ENCODE measurements at regions of chr17 and their contacts with region 1.

Region 1: GRCh38 chr17:43316522-43317142 is 82.2 kb upstream of the ARL4D start:
- DNase-seq: no peak
- ATAC-seq: 0 out of 6 replicates have a peak, but pooled peaks of 1 of the 2 experiments have one; percentile 3
- H3K4me3 ChIP-seq: no peak overlapping the region
- H3K27ac ChIP-seq: no peak overlapping the region
- H3K4me1 ChIP-seq: no peaks in the 10 kb centered on the region
- CTCF ChIP-seq: no peak
- EP300 ChIP-seq: no peak
- POLR2A ChIP-seq: no peak
- RAD21 ChIP-seq: no peak

Region 2: GRCh38 chr17:42997984-42998938 is 318.4 kb before region 1 on chr17 and contains the start of gene RPL27:
- CTCF ChIA-PET with region 1: interaction called, 3 read pairs
- POLR2A ChIA-PET with region 1: interaction called, 24 read pairs
- DNase-seq: peak; percentile 96 to 100
- ATAC-seq: peak; percentile 92 to 95
- H3K4me3 ChIP-seq: peak within 1 kb of the TSS; percentile 66
- H3K27ac ChIP-seq: peak within 1 kb of the TSS; percentile 87 to 91
- H3K4me1 ChIP-seq: peaks cover 45% of the 10 kb centered on the region
- CTCF ChIP-seq: peak; percentile 88
- EP300 ChIP-seq: no peak; a peak in 1 of 5 replicates
- POLR2A ChIP-seq: peak; percentile 88
- RAD21 ChIP-seq: peak; percentile 79 to 84
- polyA plus RNA-seq, gene RPL27: 5,588 and 5,746 TPM in 2 replicates

Region 3: DNA sequence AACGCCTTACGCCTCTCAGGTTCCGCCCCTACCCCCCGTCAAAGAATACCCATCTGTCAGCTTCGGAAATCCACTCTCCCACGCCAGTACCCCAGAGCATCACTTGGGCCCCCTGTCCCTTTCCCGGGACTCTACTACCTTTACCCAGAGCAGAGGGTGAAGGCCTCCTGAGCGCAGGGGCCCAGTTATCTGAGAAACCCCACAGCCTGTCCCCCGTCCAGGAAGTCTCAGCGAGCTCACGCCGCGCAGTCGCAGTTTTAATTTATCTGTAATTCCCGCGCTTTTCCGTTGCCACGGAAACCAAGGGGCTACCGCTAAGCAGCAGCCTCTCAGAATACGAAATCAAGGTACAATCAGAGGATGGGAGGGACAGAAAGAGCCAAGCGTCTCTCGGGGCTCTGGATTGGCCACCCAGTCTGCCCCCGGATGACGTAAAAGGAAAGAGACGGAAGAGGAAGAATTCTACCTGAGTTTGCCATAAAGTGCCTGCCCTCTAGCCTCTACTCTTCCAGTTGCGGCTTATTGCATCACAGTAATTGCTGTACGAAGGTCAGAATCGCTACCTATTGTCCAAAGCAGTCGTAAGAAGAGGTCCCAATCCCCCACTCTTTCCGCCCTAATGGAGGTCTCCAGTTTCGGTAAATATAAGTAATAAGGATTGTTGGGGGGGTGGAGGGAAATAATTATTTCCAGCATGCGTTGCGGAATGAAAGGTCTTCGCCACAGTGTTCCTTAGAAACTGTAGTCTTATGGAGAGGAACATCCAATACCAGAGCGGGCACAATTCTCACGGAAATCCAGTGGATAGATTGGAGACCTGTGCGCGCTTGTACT is 191.3 kb before region 1 on chr17 and contains the start of gene BRCA1:
- CTCF ChIA-PET with region 1: no interaction called
- POLR2A ChIA-PET with region 1: interaction called, 25 read pairs
- DNase-seq: peak; percentile 100
- ATAC-seq: peak; percentile 97 to 98
- H3K4me3 ChIP-seq: peak within 1 kb of the TSS; percentile 78
- H3K27ac ChIP-seq: peak within 1 kb of the TSS; percentile 90
- H3K4me1 ChIP-seq: peaks cover 15% of the 10 kb centered on the region
- CTCF ChIP-seq: no peak
- EP300 ChIP-seq: no peak
- POLR2A ChIP-seq: peak; percentile 37
- RAD21 ChIP-seq: no peak
- polyA plus RNA-seq, gene BRCA1: 62.5 and 71.8 TPM in 2 replicates

Region 4: GRCh38 chr17:43200127-43200526 is 116.5 kb before region 1 on chr17:
- CTCF ChIA-PET with region 1: interaction called, 3 read pairs
- POLR2A ChIA-PET with region 1: interaction called, 10 read pairs
- DNase-seq: no peak
- ATAC-seq: peak in 1 of 2 experiments; percentile 59; a peak in 3 of 6 replicates
- H3K4me3 ChIP-seq: no peak overlapping the region
- H3K27ac ChIP-seq: no peak overlapping the region
- H3K4me1 ChIP-seq: no peaks in the 10 kb centered on the region
- CTCF ChIP-seq: no peak
- EP300 ChIP-seq: no peak
- POLR2A ChIP-seq: no peak
- RAD21 ChIP-seq: no peak

Region 5: GRCh38 chr17:43217614-43218087 is 99.0 kb before region 1 on chr17:
- CTCF ChIA-PET with region 1: interaction called, 6 read pairs
- POLR2A ChIA-PET with region 1: interaction called, 52 read pairs
- DNase-seq: no peak
- ATAC-seq: no peak
- H3K4me3 ChIP-seq: no peak overlapping the region
- H3K27ac ChIP-seq: no peak overlapping the region
- H3K4me1 ChIP-seq: peaks cover 2% of the 10 kb centered on the region; the same call in 1 of the 3 replicates
- CTCF ChIP-seq: no peak
- EP300 ChIP-seq: no peak
- POLR2A ChIP-seq: no peak
- RAD21 ChIP-seq: no peak

Region 6: DNA sequence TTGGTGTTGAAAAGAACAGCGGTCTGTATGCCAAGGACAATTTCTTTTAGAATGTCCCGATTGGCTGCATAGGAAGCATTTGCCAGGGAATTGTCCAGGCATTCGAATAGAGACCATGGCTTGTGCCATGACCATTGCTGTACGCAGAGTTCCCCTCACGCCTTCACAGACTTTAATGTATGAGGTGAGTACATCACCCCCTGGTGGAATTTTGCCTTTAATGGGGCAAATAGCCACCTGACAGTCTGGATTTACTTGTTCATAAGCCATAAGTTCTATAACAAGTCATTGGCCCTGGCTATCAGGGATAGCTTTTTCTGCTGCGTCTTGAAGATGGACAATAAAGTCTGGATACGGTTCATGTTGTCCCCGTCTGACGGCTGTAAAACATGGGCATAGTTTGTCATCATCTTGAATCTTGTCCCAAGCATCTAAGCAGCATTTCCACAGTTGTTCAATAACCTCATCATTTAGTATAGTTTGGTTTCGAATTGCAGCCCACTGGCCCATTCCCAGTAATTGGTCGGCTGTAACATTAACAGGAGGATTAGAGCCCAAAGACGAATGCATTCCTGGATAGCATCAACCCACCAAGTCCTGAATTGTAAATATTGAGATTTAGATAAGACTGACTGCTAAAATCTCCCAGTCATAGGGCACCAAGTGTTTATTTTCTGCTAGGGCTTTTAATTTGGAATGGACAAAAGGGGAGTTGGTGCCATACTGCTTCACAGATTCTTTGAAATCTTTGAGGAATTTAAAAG is 14.4 kb after region 1 on chr17:
- CTCF ChIA-PET with region 1: no interaction called
- POLR2A ChIA-PET with region 1: no interaction called
- DNase-seq: peak in 1 of 2 experiments; percentile 58
- ATAC-seq: 0 out of 6 replicates have a peak, but pooled peaks of 1 of the 2 experiments have one; percentile 22
- H3K4me3 ChIP-seq: no peak overlapping the region
- H3K27ac ChIP-seq: no peak overlapping the region
- H3K4me1 ChIP-seq: peaks cover 4% of the 10 kb centered on the region; the same call in 1 of the 3 replicates
- CTCF ChIP-seq: no peak
- EP300 ChIP-seq: no peak
- POLR2A ChIP-seq: no peak
- RAD21 ChIP-seq: no peak

Region 7: DNA sequence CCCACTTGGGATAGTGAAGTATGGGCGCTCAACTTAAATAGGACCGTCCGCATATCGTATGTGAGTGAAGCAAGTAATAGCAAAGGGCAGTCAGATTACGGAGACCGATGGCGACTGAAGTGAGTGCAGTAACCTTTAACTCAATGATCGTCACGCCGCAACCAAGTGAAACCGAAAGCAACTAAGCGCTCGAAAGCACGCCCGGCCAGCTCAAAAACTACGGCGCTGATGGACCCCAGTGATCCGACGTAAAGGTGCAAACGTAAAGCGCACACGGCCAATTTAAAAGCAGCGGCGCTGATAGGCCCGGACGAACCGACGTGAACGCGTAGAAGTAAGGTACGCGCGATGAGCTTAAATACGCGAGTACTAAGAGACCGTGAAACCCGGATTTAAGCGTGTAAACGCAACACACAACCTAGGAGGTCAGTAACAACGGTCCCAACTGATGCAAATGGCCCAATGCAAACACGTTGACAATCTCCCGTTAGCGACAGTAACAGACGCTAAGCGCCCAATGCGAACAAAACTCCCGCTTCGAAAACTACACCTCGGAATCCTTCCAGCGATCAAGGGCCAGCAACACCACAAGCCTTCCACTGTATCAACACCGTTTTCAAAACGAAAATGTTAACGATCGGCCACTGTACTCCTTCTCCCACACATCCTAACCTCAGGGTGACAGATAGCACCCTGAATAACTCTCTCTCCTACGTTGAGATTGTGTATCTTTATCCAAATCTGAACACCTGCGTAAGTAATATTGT is 44.3 kb after region 1 on chr17:
- CTCF ChIA-PET with region 1: no interaction called
- POLR2A ChIA-PET with region 1: interaction called, 17 read pairs
- DNase-seq: peak; percentile 98 to 100
- ATAC-seq: peak; percentile 87 to 92
- H3K4me3 ChIP-seq: peak overlapping the region; percentile 62
- H3K27ac ChIP-seq: peak overlapping the region; percentile 88 to 91
- H3K4me1 ChIP-seq: peaks cover 28% of the 10 kb centered on the region
- CTCF ChIP-seq: no peak
- EP300 ChIP-seq: peak in 1 of 2 experiments; percentile 46; a peak in 2 of 5 replicates
- POLR2A ChIP-seq: peak; percentile 100
- RAD21 ChIP-seq: peak in 1 of 2 experiments; percentile 32; a peak in 1 of 5 replicates